IMR-90 (cell line): ENCODE measurements at regions of chr22 and their contacts with region 1.

Region 1: DNA sequence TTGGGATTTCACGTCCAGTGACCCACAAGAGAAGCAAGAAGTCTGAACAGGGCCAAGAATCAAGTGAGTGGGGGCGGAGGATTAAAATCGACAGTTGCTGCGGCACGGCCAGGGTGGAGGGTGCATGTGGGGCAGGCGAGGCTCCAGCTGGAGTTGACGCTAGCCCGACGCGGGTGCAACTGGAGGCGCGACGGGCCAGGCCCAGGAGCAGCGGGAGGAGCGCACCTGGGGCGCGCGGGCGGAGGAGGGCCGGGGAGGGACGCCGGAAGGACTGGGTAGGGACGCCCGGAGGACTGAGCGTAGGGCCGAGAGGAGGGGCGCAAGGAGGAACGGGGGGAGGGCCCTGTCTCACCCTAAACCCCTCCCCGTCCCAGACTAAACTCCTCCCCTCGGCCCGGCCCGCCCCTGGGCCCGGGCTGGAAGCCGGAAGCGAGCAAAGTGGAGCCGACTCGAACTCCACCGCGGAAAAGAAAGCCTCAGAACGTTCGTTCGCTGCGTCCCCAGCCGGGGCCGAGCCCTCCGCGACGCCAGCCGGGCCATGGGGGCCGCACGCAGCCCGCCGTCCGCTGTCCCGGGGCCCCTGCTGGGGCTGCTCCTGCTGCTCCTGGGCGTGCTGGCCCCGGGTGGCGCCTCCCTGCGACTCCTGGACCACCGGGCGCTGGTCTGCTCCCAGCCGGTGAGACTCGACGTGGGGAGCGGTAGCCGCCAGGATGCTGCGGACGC is at the start of gene IL17RA:
- DNase-seq: peak; percentile 84
- ATAC-seq: peak; percentile 98
- H3K4me3 ChIP-seq: peak within 1 kb of the TSS; percentile 83
- H3K27ac ChIP-seq: peak within 1 kb of the TSS; percentile 85
- H3K4me1 ChIP-seq: peaks cover 13% of the 10 kb centered on the region
- H3K27me3 ChIP-seq: no peaks in the 10 kb centered on the region
- CTCF ChIP-seq: no peak
- POLR2A ChIP-seq: peak; percentile 64
- RAD21 ChIP-seq: no peak
- total RNA-seq, gene IL17RA: 5.2 and 5.8 TPM in 2 replicates

Region 2: DNA sequence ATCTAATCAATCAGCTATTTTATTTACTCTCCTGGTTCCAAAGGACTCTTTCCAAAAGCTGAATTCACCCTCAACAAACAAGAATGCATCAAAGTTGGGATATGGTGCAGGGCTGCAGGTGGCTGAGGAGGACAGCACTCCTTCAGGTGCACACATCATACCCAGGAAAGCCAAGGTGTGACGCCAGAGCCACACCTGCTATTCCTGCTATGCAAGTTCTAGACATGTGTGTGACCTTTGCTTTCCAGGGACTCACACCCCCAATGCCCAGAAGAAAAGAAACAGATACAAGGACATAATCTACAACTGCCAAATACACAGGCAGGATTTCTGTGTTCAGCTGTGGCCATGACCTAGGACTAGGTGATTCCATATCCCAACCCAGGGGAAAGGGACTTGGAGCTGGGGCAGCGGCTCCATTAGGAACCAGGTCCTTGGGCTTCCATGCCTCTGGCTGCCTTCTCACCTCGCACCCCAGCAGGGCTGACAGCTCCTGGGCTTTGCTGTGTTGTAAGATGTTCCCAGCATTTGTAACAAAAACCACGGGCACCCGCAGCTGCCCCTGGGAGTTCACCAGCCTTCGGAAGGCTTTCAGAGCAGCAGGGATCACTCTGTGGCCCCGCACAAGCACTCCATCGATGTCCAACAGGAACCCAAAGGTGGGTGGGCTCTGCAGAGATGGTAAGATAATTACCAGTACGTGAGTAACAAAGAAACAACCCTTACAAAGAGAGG is 64.5 kb after region 1 on chr22:
- CTCF ChIA-PET with region 1: no interaction called
- POLR2A ChIA-PET with region 1: no interaction called
- dilution Hi-C with region 1: no loop called
- in situ Hi-C with region 1: loop called (anchors 5 kb)
- intact Hi-C with region 1: no loop called
- DNase-seq: no peak
- ATAC-seq: no peak
- H3K4me3 ChIP-seq: no peak overlapping the region
- H3K27ac ChIP-seq: no peak overlapping the region
- H3K4me1 ChIP-seq: no peaks in the 10 kb centered on the region
- H3K27me3 ChIP-seq: no peaks in the 10 kb centered on the region
- CTCF ChIP-seq: no peak
- POLR2A ChIP-seq: no peak
- RAD21 ChIP-seq: no peak

Region 3: GRCh38 chr22:17158568-17159503 is 74.1 kb after region 1 on chr22 and contains the start of gene HDHD5:
- CTCF ChIA-PET with region 1: no interaction called
- POLR2A ChIA-PET with region 1: no interaction called
- dilution Hi-C with region 1: no loop called
- in situ Hi-C with region 1: loop called (anchors 5 kb)
- intact Hi-C with region 1: loop called (anchors 2 kb)
- DNase-seq: peak; percentile 82
- ATAC-seq: peak; percentile 90
- H3K4me3 ChIP-seq: peak within 1 kb of the TSS; percentile 61
- H3K27ac ChIP-seq: peak within 1 kb of the TSS; percentile 85
- H3K4me1 ChIP-seq: peaks cover 4% of the 10 kb centered on the region; the same call in 1 of the 2 replicates
- H3K27me3 ChIP-seq: no peaks in the 10 kb centered on the region
- CTCF ChIP-seq: no peak
- POLR2A ChIP-seq: no peak
- RAD21 ChIP-seq: no peak
- total RNA-seq, gene HDHD5: 31.4 and 31.9 TPM in 2 replicates

Region 4: DNA sequence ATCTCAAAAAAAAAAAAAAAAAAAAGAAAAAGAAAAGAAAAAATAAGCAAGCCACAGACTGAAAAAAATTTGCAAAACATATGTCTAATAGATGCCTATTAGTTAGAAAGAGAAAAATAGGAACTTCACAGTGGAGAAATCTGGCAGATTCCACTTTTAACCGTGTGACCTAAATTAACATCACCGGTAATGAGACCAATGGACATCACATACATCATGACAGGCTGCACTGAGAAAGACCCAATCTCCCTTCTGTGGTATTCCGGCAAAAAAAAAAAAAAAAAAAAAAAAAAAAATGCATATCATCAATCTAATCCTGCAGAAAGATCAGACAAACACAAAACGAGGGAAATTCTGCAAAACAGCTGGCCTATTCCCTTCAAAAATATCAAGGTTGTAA is 237.8 kb after region 1 on chr22:
- CTCF ChIA-PET with region 1: no interaction called
- POLR2A ChIA-PET with region 1: no interaction called
- dilution Hi-C with region 1: no loop called
- in situ Hi-C with region 1: no loop called
- intact Hi-C with region 1: no loop called
- DNase-seq: no peak
- ATAC-seq: no peak
- H3K4me3 ChIP-seq: no peak overlapping the region
- H3K27ac ChIP-seq: no peak overlapping the region
- H3K4me1 ChIP-seq: no peaks in the 10 kb centered on the region
- H3K27me3 ChIP-seq: no peaks in the 10 kb centered on the region
- CTCF ChIP-seq: no peak
- POLR2A ChIP-seq: no peak
- RAD21 ChIP-seq: no peak

Region 5: DNA sequence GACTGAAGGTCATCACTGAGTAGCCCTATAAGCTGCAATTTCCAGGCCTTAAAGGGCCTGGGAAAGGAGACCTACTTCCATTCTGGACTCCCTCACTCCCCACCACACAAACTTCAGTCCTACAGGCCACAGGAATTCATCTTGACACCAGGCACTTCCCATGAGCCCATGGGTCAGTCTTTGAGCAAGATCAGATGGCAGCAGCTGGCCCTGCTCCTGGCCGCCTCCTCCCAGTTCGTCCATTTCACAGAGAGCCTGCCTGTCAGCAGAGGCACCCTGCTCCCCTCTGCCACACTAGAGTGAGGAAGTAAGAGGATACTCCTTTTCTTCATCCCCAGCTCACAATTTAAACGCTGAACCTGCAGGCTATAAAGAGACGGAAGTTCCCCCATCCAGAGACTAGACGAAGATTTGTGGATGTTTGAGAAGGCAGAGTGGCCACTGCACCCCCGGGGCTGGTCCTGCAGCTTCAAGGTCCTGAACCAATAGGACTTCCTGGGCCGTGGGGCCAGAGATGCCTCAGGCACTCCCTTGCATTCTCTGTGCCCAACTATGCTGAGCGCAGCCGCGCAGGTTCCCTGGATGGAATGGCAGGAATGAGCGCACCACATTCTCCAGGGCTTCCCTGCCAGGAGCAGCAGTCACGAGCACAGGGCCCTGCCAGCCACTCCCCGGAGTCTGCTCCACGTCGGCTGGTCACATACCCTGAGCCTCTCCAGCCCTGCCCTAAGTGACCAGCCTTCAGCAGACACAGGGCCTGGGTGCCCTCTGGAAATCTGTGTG is 723.1 kb after region 1 on chr22:
- CTCF ChIA-PET with region 1: no interaction called
- POLR2A ChIA-PET with region 1: no interaction called
- dilution Hi-C with region 1: no loop called
- in situ Hi-C with region 1: loop called (anchors 25 kb)
- intact Hi-C with region 1: no loop called
- DNase-seq: peak; percentile 69
- ATAC-seq: peak; percentile 92
- H3K4me3 ChIP-seq: no peak overlapping the region
- H3K27ac ChIP-seq: peak overlapping the region; percentile 22; the same call in 1 of the 2 replicates
- H3K4me1 ChIP-seq: peaks cover 9% of the 10 kb centered on the region
- H3K27me3 ChIP-seq: no peaks in the 10 kb centered on the region
- CTCF ChIP-seq: no peak
- POLR2A ChIP-seq: no peak
- RAD21 ChIP-seq: no peak